AG04449 (cell line): ENCODE measurements at regions of chr12 and their contacts with region 1.

Region 1: DNA sequence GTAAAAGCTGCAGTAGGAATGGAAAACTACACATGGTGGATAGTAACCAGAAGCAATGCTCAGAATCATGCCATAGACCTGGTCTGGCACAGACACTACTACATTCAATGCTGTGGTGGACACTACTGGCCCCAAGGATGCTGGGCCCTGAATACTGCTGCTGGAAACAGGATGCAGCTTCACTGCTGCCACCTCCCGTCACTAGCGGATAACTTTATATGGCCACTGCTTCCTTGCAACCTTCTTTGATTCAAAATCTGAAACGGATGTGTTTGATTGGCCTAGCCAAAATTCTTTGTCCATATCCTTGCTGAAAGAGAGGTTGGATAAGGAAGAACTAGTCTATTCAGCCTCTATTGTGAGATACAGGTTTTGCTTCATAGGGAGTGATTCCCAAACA is 30.7 kb downstream of the ADCY6 start:
- DNase-seq: no peak
- H3K4me3 ChIP-seq: no peak overlapping the region
- CTCF ChIP-seq: no peak

Region 2: DNA sequence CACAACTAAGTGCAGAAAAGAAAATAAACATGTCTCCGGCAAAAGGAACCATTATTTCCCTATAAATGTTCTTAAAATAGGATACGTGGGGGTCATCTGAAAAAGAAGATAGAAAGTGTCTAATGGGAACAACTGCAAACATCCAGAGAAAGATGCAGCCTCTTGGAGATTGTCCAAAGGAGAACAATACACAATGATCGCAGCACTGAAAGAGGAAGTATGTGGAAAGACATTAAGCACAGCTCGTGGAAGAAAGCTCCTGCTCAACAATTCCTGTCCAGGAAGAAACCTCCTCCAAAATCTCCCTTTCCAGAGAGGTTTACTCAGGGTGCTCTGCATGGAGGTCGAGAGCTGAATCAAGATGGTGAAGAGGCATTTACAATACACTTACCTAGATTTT is 185.9 kb before region 1 on chr12:
- CTCF ChIA-PET with region 1: no interaction called
- POLR2A ChIA-PET with region 1: no interaction called
- DNase-seq: no peak
- H3K4me3 ChIP-seq: no peak overlapping the region
- CTCF ChIP-seq: no peak

Region 3: GRCh38 chr12:48615681-48616080 is 142.5 kb before region 1 on chr12:
- CTCF ChIA-PET with region 1: no interaction called
- POLR2A ChIA-PET with region 1: no interaction called
- DNase-seq: no peak
- H3K4me3 ChIP-seq: no peak overlapping the region
- CTCF ChIP-seq: no peak

Region 4: DNA sequence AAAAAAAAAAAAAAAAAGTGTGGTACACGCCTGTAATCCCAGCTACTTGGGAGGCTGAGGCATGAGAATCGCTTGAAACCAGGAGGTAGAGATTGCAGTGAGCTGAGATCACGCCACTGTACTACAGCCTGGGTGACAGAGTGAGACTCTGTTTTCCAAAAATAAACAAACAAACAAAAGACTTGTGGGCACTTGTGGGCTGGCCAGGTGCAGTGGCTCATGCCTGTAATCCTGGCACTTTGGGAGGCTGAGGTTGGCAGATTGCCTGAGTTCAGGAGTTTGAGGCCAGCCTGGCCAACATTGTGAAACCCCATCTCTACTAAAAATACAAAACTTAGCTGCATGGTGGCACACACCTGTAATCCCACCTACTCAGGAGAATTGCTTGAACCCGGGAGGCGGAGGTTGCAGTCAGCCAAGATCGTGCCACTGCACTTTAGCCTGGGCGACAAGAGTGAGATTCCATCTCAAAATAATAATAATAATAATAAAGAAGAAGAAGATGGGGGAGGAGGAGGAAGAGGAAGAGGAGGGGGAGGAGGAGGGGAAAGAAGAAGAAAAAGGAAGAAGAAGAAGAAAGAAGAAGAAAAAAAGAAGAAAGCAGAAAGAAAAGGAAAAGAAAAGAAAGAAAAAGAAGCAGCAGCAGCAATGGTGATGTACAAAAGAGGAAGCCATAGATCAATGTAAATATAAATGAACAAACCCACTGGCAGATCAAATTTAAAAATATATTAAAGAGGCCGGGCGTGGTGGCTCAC is 13.8 kb before region 1 on chr12:
- CTCF ChIA-PET with region 1: interaction called, 58 read pairs
- POLR2A ChIA-PET with region 1: no interaction called
- DNase-seq: no peak
- H3K4me3 ChIP-seq: no peak overlapping the region
- CTCF ChIP-seq: no peak

Region 5: GRCh38 chr12:48779869-48780268 is 21.6 kb after region 1 on chr12:
- CTCF ChIA-PET with region 1: interaction called, 33 read pairs
- POLR2A ChIA-PET with region 1: no interaction called
- DNase-seq: peak; percentile 45
- H3K4me3 ChIP-seq: no peak overlapping the region; the same call in 1 of the 2 replicates
- CTCF ChIP-seq: no peak

Region 6: GRCh38 chr12:48824112-48824511 is 65.9 kb after region 1 on chr12:
- CTCF ChIA-PET with region 1: interaction called, 10 read pairs
- POLR2A ChIA-PET with region 1: no interaction called
- DNase-seq: no peak
- H3K4me3 ChIP-seq: no peak overlapping the region
- CTCF ChIP-seq: no peak